PC-9 (cell line): ENCODE measurements at regions of chr6 and their contacts with region 1.

Region 1: GRCh38 chr6:17706580-17707370 is at the start of gene NUP153:
- DNase-seq: peak; percentile 91 to 99
- H3K4me3 ChIP-seq: peak within 1 kb of the TSS; percentile 73
- H3K27ac ChIP-seq: peak within 1 kb of the TSS; percentile 89
- H3K4me1 ChIP-seq: peaks cover 24% of the 10 kb centered on the region
- H3K27me3 ChIP-seq: no peaks in the 10 kb centered on the region
- CTCF ChIP-seq: no peak
- total RNA-seq, gene NUP153: 50.7 and 74.1 TPM in 2 replicates

Region 2: DNA sequence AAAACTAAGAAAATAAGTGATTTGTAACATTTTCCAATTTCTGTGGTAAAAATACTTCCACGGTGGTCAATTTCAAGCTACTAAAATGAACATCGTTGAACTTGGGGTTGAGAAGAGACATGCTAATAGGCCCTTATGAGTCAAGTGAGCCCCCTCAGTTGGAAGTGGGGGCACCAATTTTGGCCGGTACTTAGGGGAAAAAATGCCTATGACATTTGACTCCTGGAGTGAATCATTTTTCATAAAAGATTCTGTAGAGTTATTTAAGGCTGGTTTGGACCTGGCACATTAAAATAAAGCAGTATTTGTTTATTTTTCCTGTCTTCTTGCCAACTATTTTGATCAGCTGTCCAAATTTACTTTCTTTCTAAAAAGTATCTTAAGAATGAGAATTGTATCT is 345.8 kb before region 1 on chr6:
- CTCF ChIA-PET with region 1: no interaction called
- POLR2A ChIA-PET with region 1: no interaction called
- intact Hi-C with region 1: no loop called
- DNase-seq: no peak
- H3K4me3 ChIP-seq: no peak overlapping the region
- H3K27ac ChIP-seq: no peak overlapping the region
- H3K4me1 ChIP-seq: no peaks in the 10 kb centered on the region
- H3K27me3 ChIP-seq: no peaks in the 10 kb centered on the region
- CTCF ChIP-seq: no peak

Region 3: DNA sequence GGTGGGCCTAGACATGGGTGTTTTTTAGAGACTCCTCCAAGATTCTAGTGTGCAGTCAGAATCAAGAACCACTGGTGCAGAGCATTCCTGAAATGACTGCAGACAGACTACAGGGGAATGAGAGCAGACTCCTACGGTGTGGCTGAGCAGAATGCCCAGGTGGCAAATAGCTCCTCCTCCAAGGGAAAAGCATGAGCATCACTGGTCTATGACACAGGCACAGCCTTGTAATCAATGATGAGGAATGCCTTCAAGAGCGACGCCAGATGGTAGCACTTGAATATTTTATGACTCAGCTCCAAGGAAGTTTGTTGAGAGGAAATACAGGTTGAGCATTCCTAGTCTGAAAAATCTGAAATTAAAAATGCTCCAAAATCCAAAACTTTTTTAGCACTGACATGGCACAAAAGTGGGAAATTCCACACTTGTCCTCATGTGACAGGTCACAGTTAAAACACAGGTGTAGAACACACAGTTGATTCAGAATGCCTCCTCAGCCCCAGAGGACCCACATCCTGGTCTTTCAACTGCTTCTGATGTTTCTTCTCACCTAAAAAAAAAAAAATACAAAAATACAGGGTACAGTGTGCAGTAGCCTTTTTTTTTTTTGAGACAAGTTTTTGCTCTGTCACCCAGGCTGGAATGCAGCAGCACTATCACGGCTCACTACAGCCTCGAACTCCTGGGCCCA is 117.2 kb before region 1 on chr6:
- CTCF ChIA-PET with region 1: no interaction called
- POLR2A ChIA-PET with region 1: interaction called, 10 read pairs
- intact Hi-C with region 1: no loop called
- DNase-seq: peak; percentile 73 to 94
- H3K4me3 ChIP-seq: no peak overlapping the region
- H3K27ac ChIP-seq: peak overlapping the region; percentile 24; the same call in 1 of the 2 replicates
- H3K4me1 ChIP-seq: peaks cover 11% of the 10 kb centered on the region
- H3K27me3 ChIP-seq: no peaks in the 10 kb centered on the region
- CTCF ChIP-seq: no peak; the same call in 1 of the 2 replicates

Region 4: DNA sequence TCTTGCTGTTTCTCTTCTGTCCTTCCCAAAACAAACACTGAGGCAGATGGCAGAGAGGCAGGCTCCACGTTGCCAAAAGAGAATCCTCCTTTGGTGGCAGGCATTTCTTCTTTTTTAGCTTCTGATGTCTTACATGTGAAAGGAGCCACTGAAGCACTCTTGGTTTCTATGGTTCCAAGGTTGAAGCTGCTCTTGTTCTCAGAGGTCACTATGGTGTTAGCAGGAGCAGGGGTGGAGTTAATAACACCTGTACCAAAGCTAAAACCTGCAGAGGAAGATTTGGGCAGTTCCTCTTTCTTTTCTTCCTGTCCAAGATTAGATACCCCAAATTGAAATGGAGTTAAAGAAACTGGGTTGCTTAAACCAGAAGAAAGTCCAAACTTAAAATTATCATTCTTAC is 77.9 kb before region 1 on chr6:
- CTCF ChIA-PET with region 1: no interaction called
- POLR2A ChIA-PET with region 1: no interaction called
- intact Hi-C with region 1: no loop called
- DNase-seq: no peak
- H3K4me3 ChIP-seq: no peak overlapping the region
- H3K27ac ChIP-seq: no peak overlapping the region
- H3K4me1 ChIP-seq: no peaks in the 10 kb centered on the region
- H3K27me3 ChIP-seq: no peaks in the 10 kb centered on the region
- CTCF ChIP-seq: no peak

Region 5: DNA sequence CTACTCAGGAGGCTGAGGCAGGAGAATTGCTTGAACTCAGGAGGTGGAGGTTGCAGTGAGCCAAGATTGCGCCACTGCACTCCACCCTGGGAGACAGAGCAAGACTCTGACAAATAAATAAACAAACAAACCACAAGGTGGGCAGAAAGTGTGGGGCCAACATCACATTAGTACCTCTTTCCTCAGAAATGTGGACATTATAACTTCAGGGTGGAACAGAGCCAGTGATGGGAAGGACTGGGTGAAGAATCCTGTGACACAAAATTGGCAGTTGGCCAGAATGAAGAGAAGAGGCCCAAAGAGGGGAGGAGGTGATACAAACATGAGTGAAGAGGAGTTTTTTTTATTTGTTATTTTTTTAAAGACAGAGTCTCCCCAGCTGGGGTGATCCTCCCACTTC is 50.7 kb before region 1 on chr6:
- CTCF ChIA-PET with region 1: interaction called, 10 read pairs
- POLR2A ChIA-PET with region 1: interaction called, 10 read pairs
- intact Hi-C with region 1: no loop called
- DNase-seq: no peak
- H3K4me3 ChIP-seq: no peak overlapping the region
- H3K27ac ChIP-seq: no peak overlapping the region
- H3K4me1 ChIP-seq: peaks cover 1% of the 10 kb centered on the region; the same call in 1 of the 2 replicates
- H3K27me3 ChIP-seq: no peaks in the 10 kb centered on the region
- CTCF ChIP-seq: no peak

Region 6: DNA sequence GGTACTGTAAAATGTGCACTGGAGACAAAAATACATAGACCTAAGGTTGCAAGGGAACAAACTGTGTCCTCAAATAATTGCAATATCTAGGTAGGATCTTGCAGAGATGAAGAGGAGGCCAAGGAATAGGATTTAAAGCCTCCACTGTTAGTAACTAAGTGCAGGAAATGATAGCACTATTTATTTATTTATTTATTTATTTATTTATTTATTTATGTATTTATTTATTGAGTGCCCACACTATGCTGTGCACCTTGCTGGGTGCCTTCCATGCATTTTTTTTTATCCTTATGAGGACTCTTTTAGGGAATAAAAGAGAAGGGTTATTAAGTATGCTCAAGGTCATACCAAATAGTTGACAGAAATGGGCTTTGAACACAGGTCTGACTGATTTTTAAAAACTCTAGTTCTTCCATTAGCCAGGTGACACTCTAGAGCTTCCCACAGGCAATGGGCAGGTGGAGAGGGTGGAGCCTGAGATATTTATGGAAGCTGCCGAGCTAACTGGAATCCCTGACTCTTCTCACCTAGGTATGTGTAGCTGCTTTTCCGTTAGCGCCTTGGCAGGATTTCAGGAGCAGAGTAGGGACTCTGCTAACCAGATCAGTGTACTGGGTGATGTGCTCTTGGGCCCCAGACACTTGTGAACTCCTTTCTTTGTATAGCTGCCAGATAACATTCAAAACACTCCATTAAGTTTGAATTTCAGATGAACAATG is 12.7 kb after region 1 on chr6:
- CTCF ChIA-PET with region 1: interaction called, 18 read pairs
- POLR2A ChIA-PET with region 1: interaction called, 5 read pairs
- intact Hi-C with region 1: loop called (anchors 2 kb)
- DNase-seq: no peak
- H3K4me3 ChIP-seq: no peak overlapping the region
- H3K27ac ChIP-seq: no peak overlapping the region
- H3K4me1 ChIP-seq: peaks cover 37% of the 10 kb centered on the region
- H3K27me3 ChIP-seq: no peaks in the 10 kb centered on the region
- CTCF ChIP-seq: no peak

Region 7: GRCh38 chr6:17768388-17768787 is 61.6 kb after region 1 on chr6:
- CTCF ChIA-PET with region 1: interaction called, 12 read pairs
- POLR2A ChIA-PET with region 1: no interaction called
- intact Hi-C with region 1: no loop called
- DNase-seq: no peak
- H3K4me3 ChIP-seq: no peak overlapping the region
- H3K27ac ChIP-seq: no peak overlapping the region
- H3K4me1 ChIP-seq: no peaks in the 10 kb centered on the region
- H3K27me3 ChIP-seq: no peaks in the 10 kb centered on the region
- CTCF ChIP-seq: no peak